CD4-positive, alpha-beta memory T cell (primary cell): ENCODE measurements at regions of chr13 and their contacts with region 1.

Region 1: DNA sequence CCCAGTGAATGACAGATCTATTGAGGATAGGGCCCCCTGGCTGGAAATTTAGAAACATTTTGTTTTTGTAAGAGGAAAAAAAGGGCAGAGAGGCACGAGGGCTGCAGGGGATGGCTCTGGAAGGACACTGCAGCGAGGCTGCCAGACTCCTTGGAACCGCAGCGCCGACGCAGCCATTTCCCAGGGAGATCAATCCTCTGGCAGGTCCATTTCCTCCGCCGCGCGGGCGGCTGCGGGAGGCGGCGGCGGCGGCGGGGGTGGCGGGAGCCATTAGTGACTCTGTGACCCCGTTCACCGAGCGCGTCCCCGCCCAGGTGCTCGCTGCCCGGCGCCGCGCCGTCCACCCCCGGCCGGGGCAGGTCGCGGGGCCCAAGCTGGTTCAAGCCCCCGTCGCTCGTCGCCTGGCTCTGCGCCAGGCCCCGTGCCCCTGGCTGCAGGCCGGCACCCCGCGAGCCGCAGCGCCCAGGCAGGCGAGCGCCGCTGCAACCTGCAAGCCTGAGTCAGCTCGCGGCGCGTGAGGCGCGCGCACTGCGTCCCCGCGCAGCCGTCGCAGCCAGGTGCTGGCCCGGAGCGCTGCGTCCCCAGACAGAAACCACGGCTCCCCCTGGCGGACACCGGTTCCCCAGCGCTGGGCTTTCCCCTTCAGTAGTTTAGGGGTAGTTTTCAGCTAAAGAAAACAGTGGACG is 192.6 kb downstream of the KATNAL1 start:
- DNase-seq: peak; percentile 89 to 91 (median 90)
- H3K4me3 ChIP-seq: peak overlapping the region in 1 of 2 donors; percentile 30
- H3K4me3 Mint-ChIP-seq: peak overlapping the region; percentile 80 to 88 (median 86)
- H3K27ac ChIP-seq: peak overlapping the region; percentile 22
- H3K27ac Mint-ChIP-seq: peak overlapping the region; percentile 64 to 94 (median 85)
- H3K4me1 ChIP-seq: peaks cover 29% of the 10 kb centered on the region
- H3K4me1 Mint-ChIP-seq: peaks cover 18 to 47% (median 34%) of the 10 kb centered on the region in 4 donors
- H3K27me3 ChIP-seq: no peaks in the 10 kb centered on the region
- H3K27me3 Mint-ChIP-seq: no peaks in the 10 kb centered on the region

Region 2: DNA sequence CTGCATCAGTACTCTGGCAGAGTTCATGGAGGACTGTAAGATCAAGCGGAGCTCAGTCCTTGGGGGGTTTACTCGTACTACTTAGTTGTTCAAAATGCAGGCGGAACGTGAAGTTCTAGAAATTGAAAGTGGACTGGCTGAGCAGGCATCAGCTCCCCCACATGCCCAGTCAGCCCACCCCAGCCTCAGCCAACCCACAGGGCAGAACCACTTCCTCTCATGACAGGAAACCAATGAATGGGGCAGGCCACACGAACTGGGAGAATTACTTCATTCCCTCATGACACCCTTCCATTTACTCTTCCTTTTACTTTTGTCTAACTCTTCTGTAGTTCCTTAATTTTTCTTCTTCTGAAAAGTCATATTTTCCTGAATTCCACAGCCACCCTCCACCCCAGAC is 1691.7 kb before region 1 on chr13:
- CTCF ChIA-PET with region 1: no interaction called
- POLR2A ChIA-PET with region 1: no interaction called
- intact Hi-C with region 1: no loop called
- DNase-seq: no peak
- H3K4me3 ChIP-seq: no peak overlapping the region
- H3K4me3 Mint-ChIP-seq: peak overlapping the region in 2 of 8 donors; percentile 30 to 40
- H3K27ac ChIP-seq: no peak overlapping the region
- H3K27ac Mint-ChIP-seq: no peak overlapping the region
- H3K4me1 ChIP-seq: peaks cover 9% of the 10 kb centered on the region
- H3K4me1 Mint-ChIP-seq: peaks cover 7 to 12% (median 9%) of the 10 kb centered on the region in 4 donors
- H3K27me3 ChIP-seq: no peaks in the 10 kb centered on the region
- H3K27me3 Mint-ChIP-seq: peaks cover 7 to 11% of the 10 kb centered on the region in 2 donors

Region 3: DNA sequence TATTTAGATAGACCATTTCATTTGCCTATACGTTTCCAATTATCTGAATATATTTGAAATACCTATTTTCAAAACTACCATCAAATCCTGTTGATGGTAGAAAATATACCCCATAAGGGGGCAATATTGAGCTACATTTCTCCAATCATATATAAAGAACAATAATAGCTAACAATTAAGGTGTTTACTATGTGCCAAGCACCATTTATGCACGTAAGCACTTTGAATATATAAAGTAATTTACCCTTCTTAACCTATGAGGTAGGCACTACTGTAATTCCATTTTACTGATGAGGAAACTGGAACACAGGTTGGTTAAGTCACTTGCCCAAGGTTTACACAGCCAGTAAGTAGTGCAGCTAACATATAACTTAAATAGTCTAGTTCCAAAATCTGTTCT is 343.5 kb before region 1 on chr13:
- CTCF ChIA-PET with region 1: interaction called, 415 read pairs
- POLR2A ChIA-PET with region 1: interaction called, 48 read pairs
- intact Hi-C with region 1: loop called (anchors 1 kb)
- DNase-seq: peak in 4 of 5 donors; percentile 49 to 54 (median 52)
- H3K4me3 ChIP-seq: no peak overlapping the region
- H3K4me3 Mint-ChIP-seq: no peak overlapping the region
- H3K27ac ChIP-seq: no peak overlapping the region
- H3K27ac Mint-ChIP-seq: no peak overlapping the region
- H3K4me1 ChIP-seq: no peaks in the 10 kb centered on the region
- H3K4me1 Mint-ChIP-seq: peaks cover 0 to 4% (median 3%) of the 10 kb centered on the region in 4 donors
- H3K27me3 ChIP-seq: no peaks in the 10 kb centered on the region
- H3K27me3 Mint-ChIP-seq: no peaks in the 10 kb centered on the region

Region 4: DNA sequence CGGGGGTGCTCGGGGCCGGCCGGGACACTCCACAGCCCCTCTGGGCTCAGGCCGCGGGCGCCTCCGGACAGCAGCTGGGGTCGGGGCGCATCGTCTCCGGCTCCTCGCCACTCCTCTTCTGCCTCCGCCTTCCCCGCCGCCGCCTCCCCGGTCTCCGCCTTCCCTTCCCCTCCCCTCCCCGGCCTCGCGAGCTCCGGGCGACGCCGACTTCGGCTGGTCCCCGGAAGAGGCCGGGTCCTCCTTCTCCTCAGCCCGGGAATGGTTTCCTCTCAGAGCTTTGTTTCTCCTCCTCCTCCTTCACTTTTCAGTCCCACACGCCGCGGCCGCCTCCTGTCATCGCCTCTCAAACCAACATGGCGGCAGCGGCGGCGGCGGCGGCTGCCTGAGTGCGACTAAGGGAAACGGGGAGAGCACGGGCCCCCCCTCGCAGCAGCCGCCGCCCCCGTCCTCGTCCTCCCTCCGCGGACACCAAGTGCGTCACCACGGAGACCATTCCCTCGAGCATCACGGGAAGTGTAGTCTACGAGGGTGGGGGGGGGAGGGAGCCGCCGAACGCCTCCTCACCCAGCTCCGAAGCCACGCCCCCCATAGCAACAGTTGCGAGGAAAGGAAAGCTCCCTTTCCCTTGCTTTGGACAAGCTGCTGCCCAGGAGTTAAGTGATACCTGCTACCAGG is 264.4 kb before region 1 on chr13 and contains the start of gene UBL3:
- CTCF ChIA-PET with region 1: interaction called, 315 read pairs
- POLR2A ChIA-PET with region 1: interaction called, 93 read pairs
- intact Hi-C with region 1: loop called (anchors 1 kb)
- DNase-seq: peak; percentile 91 to 96 (median 93)
- H3K4me3 ChIP-seq: peak within 1 kb of the TSS; percentile 85 to 93
- H3K4me3 Mint-ChIP-seq: peak within 1 kb of the TSS; percentile 93 to 99 (median 98)
- H3K27ac ChIP-seq: peak within 1 kb of the TSS; percentile 94
- H3K27ac Mint-ChIP-seq: peak within 1 kb of the TSS; percentile 97 to 100 (median 99)
- H3K4me1 ChIP-seq: peaks cover 28% of the 10 kb centered on the region
- H3K4me1 Mint-ChIP-seq: peaks cover 18 to 39% (median 24%) of the 10 kb centered on the region in 4 donors
- H3K27me3 ChIP-seq: no peaks in the 10 kb centered on the region
- H3K27me3 Mint-ChIP-seq: no peaks in the 10 kb centered on the region
- total RNA-seq, gene UBL3: 45.7 to 47.0 TPM

Region 5: GRCh38 chr13:30100226-30100625 is 14.5 kb before region 1 on chr13:
- CTCF ChIA-PET with region 1: interaction called, 11 read pairs
- POLR2A ChIA-PET with region 1: no interaction called
- intact Hi-C with region 1: no loop called
- DNase-seq: no peak
- H3K4me3 ChIP-seq: no peak overlapping the region
- H3K4me3 Mint-ChIP-seq: no peak overlapping the region
- H3K27ac ChIP-seq: no peak overlapping the region
- H3K27ac Mint-ChIP-seq: no peak overlapping the region
- H3K4me1 ChIP-seq: no peaks in the 10 kb centered on the region
- H3K4me1 Mint-ChIP-seq: peaks cover 0 to 2% (median 0%) of the 10 kb centered on the region in 4 donors
- H3K27me3 ChIP-seq: no peaks in the 10 kb centered on the region
- H3K27me3 Mint-ChIP-seq: peaks cover 5 to 6% of the 10 kb centered on the region in 2 donors

Region 6: DNA sequence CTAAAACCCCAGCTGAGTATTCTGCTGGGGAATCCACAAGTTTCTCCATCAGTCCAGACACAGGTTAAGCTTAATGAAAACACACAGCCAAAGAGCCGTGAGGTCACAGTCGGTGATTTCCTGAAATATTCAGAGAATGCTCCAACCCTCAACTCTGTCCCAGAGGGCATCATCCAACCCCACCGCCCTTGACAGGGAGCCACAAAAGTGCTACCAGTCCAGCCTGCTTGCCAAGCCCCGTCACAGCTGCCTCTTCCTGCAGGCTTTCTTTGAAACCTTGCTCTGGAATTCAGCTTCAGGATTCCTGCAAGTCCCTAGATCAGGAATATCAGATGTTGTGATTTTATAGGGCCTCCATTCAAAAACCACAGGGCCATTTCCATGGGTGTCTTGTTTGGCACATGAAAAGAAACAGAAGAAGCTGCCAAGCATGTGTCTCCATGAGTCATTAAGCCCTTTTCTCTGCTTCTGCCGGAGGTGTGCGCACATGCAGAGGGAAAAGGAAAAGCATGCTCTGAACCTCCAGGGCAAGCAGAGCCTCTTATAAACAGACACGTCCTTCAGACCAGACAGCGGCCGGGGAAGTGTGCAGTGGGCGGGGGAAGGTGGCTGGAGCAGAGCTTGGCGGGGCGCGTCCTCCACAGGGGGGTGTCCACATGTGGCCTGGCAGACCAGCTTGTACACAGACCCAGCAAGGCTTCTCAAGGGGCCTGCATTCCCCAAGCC is 27.9 kb after region 1 on chr13:
- CTCF ChIA-PET with region 1: interaction called, 10 read pairs
- POLR2A ChIA-PET with region 1: interaction called, 12 read pairs
- intact Hi-C with region 1: no loop called
- DNase-seq: peak; percentile 13 to 64 (median 22)
- H3K4me3 ChIP-seq: no peak overlapping the region
- H3K4me3 Mint-ChIP-seq: peak overlapping the region in 7 of 8 donors; percentile 4 to 74 (median 53)
- H3K27ac ChIP-seq: peak overlapping the region; percentile 27
- H3K27ac Mint-ChIP-seq: peak overlapping the region; percentile 83 to 92 (median 88)
- H3K4me1 ChIP-seq: peaks cover 67% of the 10 kb centered on the region
- H3K4me1 Mint-ChIP-seq: peaks cover 49 to 86% (median 70%) of the 10 kb centered on the region in 4 donors
- H3K27me3 ChIP-seq: no peaks in the 10 kb centered on the region
- H3K27me3 Mint-ChIP-seq: no peaks in the 10 kb centered on the region

Region 7: DNA sequence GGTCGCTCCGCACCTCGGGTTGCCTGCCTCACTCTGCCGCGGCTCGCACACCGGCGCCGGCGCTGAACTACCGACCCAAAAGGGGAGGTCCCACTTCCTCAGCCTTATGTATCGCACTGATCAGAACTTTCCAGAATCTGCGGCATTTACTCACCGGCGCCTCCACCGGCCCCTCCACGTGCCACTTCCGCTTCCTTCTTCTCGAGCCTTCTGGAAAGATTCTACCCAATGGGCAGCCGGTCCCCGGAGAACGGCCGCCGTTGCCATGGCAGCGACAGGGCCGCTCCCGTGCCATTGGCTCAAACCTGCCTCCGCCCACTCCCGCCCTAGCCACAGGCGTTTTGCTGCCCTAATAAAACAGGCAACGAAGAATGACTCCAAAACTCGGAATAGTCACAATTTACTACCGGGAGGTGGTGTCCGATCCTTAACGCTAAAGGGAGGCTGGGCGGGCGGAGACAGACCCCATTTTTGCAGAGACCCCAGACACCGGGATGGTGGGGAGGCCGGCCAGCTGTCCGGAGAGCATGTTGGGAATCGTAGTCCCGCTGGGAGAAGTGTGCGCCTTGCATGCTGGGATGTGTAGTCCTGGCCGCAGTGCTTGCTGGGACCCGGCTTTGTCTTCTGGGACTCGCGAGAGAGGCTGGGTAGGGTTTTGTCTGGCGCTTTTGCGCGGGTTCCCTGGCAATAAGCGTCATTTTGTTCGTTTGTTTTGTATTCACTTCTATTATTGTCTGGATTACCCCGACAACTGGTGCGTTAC is 1047.3 kb after region 1 on chr13 and contains the start of gene HSPH1:
- CTCF ChIA-PET with region 1: no interaction called
- POLR2A ChIA-PET with region 1: no interaction called
- intact Hi-C with region 1: loop called (anchors 5 kb)
- DNase-seq: peak; percentile 99 to 100 (median 100)
- H3K4me3 ChIP-seq: peak within 1 kb of the TSS; percentile 79 to 96
- H3K4me3 Mint-ChIP-seq: peak within 1 kb of the TSS; percentile 96 to 99 (median 98)
- H3K27ac ChIP-seq: peak within 1 kb of the TSS; percentile 95
- H3K27ac Mint-ChIP-seq: peak within 1 kb of the TSS; percentile 97 to 100 (median 99)
- H3K4me1 ChIP-seq: peaks cover 37% of the 10 kb centered on the region
- H3K4me1 Mint-ChIP-seq: peaks cover 23 to 54% (median 29%) of the 10 kb centered on the region in 4 donors
- H3K27me3 ChIP-seq: no peaks in the 10 kb centered on the region
- H3K27me3 Mint-ChIP-seq: no peaks in the 10 kb centered on the region
- total RNA-seq, gene HSPH1: 68.6 to 75.5 TPM